ENCODE measurements at regions of chr6 and their contacts with region 1.

Region 1: DNA sequence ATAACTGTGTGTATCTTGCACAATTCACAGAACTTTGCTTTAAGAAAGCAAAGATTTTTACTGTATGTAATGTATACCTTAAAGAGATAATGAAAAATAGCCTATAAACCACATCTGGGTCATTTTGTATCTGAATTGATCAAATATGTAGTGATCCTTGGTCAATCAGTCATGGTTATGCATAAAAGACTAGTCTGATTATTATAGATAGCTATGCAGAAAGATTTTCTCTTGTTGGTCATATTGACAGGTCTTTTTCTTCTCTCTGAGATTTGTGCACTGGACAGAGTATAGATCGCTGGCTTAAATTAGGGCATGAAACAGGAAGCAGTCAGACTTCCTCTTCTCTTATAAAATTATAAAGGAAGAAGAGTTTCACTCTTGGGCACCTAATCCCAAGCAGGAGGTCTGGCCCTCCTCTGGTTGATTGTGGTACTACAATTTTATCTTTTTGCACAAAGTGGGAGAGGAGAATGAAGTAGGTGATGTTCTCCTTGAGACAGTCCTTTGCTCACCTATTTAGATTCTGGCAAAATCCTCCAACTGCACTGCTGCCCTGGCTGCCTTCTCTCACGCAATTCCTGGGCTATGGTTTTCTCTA is 380.9 kb upstream of the RGS17 start:
- DNase-seq: no peak
- H3K4me3 ChIP-seq: no peak overlapping the region
- H3K27ac ChIP-seq: no peak overlapping the region
- H3K27me3 ChIP-seq: no peaks in the 10 kb centered on the region
- CTCF ChIP-seq: peak; percentile 36 to 78 (median 64)

Region 2: DNA sequence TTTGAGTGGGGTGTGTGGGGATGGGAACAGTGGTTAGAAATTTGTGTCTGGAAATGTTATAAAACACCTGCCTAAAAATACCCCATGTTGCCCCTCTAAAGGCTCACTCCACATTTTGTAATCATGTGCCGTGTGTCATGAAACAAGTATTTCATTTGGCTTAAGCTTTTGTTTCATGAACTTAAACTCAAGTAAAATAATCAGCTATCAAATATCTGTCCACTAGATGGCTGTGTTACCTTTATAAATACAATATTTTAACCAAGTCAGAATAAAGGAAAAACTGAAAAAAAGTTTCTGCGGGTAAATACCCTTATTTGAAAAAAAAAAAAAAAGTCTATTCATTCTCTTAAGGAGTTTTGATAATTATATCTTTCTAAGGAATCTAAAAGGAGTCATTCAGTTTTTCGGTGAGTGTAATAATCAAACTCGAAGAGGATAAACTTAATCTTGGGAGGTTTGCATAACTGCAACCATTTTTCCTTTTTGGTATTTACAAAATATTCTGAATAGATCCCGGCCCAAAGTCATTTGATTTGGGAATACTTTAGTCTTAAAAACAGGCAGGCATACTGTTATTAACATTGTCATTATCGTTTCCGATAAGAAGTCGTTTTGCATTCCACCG is 479.6 kb before region 1 on chr6:
- intact Hi-C with region 1: loop called in 1 of 2 experiments (anchors 5 kb)
- DNase-seq: no peak
- H3K4me3 ChIP-seq: no peak overlapping the region
- H3K27ac ChIP-seq: no peak overlapping the region
- H3K27me3 ChIP-seq: no peaks in the 10 kb centered on the region
- CTCF ChIP-seq: peak; percentile 42 to 77 (median 60)

Region 3: DNA sequence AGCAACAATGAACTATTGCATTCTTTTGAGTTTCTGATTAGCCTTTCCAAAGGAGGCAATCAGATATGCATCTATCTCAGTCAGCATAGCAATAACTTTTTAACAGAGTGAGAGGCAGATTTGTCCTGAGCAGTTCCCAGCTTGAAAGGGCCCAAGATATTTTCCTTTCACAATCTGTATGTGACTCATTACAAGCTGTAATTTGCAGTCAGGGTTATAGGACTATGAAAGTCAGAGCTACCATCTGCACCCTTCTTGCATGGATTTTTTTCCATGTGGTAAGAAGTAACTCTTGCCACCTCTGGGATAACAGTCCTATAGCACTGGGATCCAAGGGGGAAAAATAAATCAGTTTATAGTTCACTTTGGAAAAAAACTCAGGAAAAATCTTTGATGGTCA is 62.7 kb before region 1 on chr6:
- intact Hi-C with region 1: no loop called
- DNase-seq: no peak
- H3K4me3 ChIP-seq: no peak overlapping the region
- H3K27ac ChIP-seq: no peak overlapping the region
- H3K27me3 ChIP-seq: no peaks in the 10 kb centered on the region
- CTCF ChIP-seq: no peak

Measured in dorsolateral prefrontal cortex (tissue), 120 donors.